ENCODE measurements at regions of chr15 and their contacts with region 1.

Region 1: DNA sequence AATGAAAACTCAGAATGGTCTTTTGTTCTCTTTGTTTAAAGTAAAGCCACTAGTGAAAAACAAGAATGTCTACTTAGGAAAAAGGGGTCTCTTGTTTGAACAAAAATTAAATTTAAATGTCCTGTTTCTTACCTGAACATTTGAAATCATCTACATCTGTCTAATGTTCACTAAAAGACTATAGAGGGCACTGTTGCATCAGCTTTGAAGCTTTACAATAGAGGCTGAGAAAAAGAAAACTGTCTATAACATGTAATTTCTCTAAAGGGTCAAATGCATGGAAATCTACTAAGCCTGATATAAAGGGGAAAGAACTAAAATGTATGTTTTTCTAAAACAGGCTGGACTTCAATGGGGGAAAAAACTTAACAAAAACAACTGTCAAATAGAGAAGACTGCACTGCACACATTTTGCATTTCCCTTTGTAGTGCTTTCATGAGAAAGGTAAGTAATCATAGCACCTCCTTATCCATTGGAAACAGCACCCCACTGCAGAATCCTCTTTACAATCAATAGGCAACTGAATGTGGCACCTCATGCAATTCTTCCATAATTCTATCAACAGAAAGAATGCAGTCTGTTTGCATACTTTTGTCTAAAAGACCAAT is 26.3 kb downstream of the DPH6 start:
- DNase-seq: peak; percentile 77
- H3K4me3 ChIP-seq: no peak overlapping the region
- H3K27ac ChIP-seq: no peak overlapping the region
- H3K4me1 ChIP-seq: peaks cover 18% of the 10 kb centered on the region
- H3K27me3 ChIP-seq: no peaks in the 10 kb centered on the region
- CTCF ChIP-seq: peak; percentile 38 to 39
- POLR2A ChIP-seq: no peak

Region 2: DNA sequence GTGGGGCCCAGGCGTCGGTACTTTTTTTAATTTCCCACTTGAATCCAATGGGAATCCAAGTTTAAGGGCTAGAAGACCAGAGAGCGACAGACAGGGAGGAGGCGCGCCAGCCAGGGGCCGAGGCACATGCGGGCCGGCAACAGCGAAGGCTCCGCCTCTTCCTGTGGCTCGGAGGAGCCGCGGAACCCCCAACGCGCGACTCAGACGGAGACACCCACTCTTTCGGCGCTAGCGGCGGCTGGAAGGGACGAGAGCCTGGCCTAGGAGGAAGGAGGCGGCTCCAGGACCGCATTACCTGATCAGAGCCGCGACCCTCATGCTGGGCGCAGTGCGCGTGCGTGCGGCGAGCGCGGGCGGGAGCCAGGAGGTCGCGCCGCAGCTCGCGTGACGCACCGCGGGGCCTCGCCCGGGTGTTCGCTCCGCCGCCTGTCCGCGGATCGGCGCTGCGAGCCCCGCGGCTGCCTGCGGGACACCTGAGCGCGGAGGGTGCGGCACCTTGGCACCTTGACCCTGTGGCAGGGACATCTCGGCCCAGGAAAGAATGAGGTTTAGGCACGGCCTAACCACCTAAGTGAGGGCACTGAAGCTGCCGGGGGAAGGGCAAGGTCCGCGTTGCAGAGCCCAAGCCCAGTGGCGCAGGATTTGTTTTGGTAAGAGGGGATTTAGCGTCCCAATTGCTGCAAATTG is 26.3 kb after region 1 on chr15 and contains the start of gene DPH6:
- CTCF ChIA-PET with region 1: interaction called, 4 read pairs
- POLR2A ChIA-PET with region 1: no interaction called
- dilution Hi-C with region 1: no loop called
- intact Hi-C with region 1: loop called (anchors 2 kb)
- DNase-seq: peak; percentile 91
- H3K4me3 ChIP-seq: peak within 1 kb of the TSS; percentile 13 to 60 (median 40)
- H3K27ac ChIP-seq: peak within 1 kb of the TSS; percentile 96
- H3K4me1 ChIP-seq: peaks cover 10% of the 10 kb centered on the region
- H3K27me3 ChIP-seq: no peaks in the 10 kb centered on the region
- CTCF ChIP-seq: no peak
- POLR2A ChIP-seq: peak; percentile 81
- total RNA-seq, gene DPH6: 10.1 and 12.4 TPM in 2 replicates

Region 3: DNA sequence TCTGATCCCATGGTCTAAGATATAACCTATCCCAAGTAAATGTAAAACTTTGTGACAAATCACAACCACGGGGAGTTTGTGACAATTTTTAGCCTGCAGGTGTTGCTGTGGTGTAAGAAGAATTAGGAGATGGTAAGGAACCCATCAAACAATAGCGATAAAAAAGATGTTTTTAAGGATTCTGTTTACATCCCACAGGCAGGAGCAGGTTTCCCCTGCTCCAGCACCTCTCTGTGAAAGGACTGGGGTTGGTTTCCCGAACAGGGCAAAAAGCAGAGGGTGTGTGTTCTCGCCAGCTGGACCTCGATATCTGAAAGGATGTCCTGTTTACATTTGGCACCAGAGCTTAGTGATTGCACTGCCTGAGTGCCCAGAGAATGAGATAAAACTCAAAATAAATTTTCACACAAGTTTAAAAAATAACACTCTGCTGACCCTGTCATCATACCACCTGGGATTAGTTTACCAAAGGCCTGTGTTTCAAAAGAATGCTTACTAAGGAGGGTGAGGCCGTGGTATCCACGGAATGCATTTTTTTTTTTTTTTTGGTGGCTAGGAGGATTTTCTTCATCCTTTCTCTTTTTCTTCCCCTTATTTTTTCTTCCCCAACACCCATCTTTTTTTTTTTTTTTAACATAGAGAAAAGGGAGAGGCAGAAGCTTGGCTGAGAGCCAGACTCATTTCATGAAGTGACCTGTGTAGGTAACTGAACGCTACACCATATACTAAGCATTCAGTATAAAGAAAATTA is 178.1 kb after region 1 on chr15:
- CTCF ChIA-PET with region 1: interaction called, 11 read pairs
- POLR2A ChIA-PET with region 1: no interaction called
- dilution Hi-C with region 1: no loop called
- intact Hi-C with region 1: loop called (anchors 1 kb)
- DNase-seq: peak; percentile 97
- H3K4me3 ChIP-seq: peak overlapping the region in 1 of 3 experiments; percentile 18
- H3K27ac ChIP-seq: peak overlapping the region; percentile 92
- H3K4me1 ChIP-seq: peaks cover 37% of the 10 kb centered on the region
- H3K27me3 ChIP-seq: no peaks in the 10 kb centered on the region
- CTCF ChIP-seq: peak; percentile 13 to 19
- POLR2A ChIP-seq: peak; percentile 25

Region 4: DNA sequence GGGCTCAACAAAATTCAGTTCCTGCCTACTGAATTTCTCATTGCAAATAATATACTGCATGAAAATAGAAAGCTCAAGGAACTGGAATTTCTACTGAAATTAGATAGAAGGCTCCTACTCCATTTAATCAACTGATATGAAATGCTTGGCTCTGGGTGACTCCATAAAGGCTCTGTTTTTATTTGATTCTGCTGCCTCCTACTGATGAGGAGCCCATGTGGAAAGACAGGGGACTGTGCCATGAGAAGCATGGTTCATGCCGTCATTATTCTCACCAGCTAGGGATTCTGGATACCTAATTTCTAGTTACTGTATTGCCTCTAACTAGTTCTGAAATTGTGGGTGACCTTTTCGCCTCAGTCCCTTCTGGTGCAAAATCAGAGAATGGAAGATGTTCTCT is 392.6 kb after region 1 on chr15:
- CTCF ChIA-PET with region 1: no interaction called
- POLR2A ChIA-PET with region 1: no interaction called
- dilution Hi-C with region 1: no loop called
- intact Hi-C with region 1: loop called (anchors 2 kb)
- DNase-seq: peak; percentile 31
- H3K4me3 ChIP-seq: no peak overlapping the region
- H3K27ac ChIP-seq: no peak overlapping the region
- H3K4me1 ChIP-seq: no peaks in the 10 kb centered on the region
- H3K27me3 ChIP-seq: peaks cover 0 to 2% of the 10 kb centered on the region in 2 experiments
- CTCF ChIP-seq: peak in 1 of 2 donors; percentile 8
- POLR2A ChIP-seq: no peak

Region 5: GRCh38 chr15:36645106-36645505 is 1125.5 kb after region 1 on chr15:
- CTCF ChIA-PET with region 1: interaction called, 3 read pairs
- POLR2A ChIA-PET with region 1: no interaction called
- dilution Hi-C with region 1: no loop called
- intact Hi-C with region 1: loop called (anchors 1 kb)
- DNase-seq: peak; percentile 29
- H3K4me3 ChIP-seq: no peak overlapping the region
- H3K27ac ChIP-seq: no peak overlapping the region
- H3K4me1 ChIP-seq: no peaks in the 10 kb centered on the region
- H3K27me3 ChIP-seq: no peaks in the 10 kb centered on the region
- CTCF ChIP-seq: no peak
- POLR2A ChIP-seq: no peak

Region 6: DNA sequence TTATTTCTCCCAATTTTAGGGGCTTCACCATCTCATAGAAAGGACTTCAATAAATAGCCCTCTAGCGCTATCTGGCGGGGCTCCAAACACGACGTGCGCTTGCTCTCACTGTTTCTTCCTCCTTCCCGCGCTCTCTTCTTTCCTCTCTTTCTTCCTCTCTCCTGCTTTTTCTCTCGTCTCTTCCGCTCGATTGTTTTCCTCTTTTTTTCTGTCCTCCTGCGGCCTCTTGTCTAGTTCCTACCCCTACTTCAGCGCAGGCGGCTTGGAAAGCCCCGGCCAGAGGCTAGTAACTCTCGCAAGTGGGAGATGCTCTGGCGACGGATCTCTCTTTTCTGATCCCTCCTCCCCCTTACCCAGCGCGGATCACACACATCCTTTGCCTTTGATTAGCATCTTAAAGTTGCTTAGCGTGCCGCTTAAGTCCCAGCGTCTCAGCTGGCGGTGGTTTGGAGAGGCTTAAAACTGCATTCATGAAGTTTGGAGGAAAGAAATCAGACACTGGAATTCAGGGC is 1586.9 kb after region 1 on chr15:
- CTCF ChIA-PET with region 1: interaction called, 5 read pairs
- POLR2A ChIA-PET with region 1: no interaction called
- dilution Hi-C with region 1: no loop called
- intact Hi-C with region 1: loop called (anchors 5 kb)
- DNase-seq: peak; percentile 34
- H3K4me3 ChIP-seq: no peak overlapping the region
- H3K27ac ChIP-seq: no peak overlapping the region
- H3K4me1 ChIP-seq: peaks cover 12% of the 10 kb centered on the region
- H3K27me3 ChIP-seq: peaks cover 63 to 90% of the 10 kb centered on the region in 2 experiments
- CTCF ChIP-seq: peak; percentile 31
- POLR2A ChIP-seq: no peak

Measured in endothelial cell of umbilical vein (primary cell).